ENCODE measurements at regions of chr9 and their contacts with region 1.

Region 1: DNA sequence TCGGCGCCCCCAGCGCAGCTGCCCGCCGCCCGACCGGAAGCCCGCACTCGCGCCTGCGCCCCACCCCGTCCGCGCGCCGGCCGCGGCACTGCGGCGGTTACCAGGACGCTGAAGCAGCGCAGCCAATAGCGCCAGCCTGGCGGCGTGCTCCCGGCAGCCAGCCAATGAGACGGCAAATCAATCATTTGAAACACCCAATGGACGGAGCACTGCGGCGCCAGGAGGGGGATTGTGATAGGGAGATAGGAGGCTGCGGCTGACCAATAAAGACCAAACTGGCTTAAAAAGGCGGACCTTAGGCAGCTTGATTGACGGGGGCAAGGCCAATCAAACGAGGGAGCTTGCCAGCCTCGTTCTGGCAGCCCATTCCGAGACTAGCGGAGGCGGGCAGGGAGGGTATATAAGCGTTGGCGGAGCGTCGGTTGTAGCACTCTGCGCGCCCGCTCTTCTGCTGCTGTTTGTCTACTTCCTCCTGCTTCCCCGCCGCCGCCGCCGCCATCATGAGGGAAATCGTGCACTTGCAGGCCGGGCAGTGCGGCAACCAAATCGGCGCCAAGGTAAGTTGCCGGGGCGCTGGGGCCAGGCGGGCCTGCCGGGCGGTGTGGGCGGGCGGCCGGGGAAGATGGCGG is at the start of gene TUBB4B:
- DNase-seq: peak; percentile 98 to 100 (median 99)
- H3K4me3 ChIP-seq: peak within 1 kb of the TSS; percentile 17 to 63
- H3K4me3 Mint-ChIP-seq: peak within 1 kb of the TSS; percentile 83 to 93 (median 92)
- H3K27ac ChIP-seq: peak within 1 kb of the TSS; percentile 75
- H3K27ac Mint-ChIP-seq: peak within 1 kb of the TSS; percentile 89 to 97 (median 94)
- H3K4me1 ChIP-seq: peaks cover 40% of the 10 kb centered on the region
- H3K4me1 Mint-ChIP-seq: peaks cover 6 to 43% (median 25%) of the 10 kb centered on the region in 4 donors
- H3K27me3 ChIP-seq: no peaks in the 10 kb centered on the region
- H3K27me3 Mint-ChIP-seq: peaks cover 0 to 2% of the 10 kb centered on the region in 2 donors
- total RNA-seq, gene TUBB4B: 99.8 to 103 TPM

Region 2: DNA sequence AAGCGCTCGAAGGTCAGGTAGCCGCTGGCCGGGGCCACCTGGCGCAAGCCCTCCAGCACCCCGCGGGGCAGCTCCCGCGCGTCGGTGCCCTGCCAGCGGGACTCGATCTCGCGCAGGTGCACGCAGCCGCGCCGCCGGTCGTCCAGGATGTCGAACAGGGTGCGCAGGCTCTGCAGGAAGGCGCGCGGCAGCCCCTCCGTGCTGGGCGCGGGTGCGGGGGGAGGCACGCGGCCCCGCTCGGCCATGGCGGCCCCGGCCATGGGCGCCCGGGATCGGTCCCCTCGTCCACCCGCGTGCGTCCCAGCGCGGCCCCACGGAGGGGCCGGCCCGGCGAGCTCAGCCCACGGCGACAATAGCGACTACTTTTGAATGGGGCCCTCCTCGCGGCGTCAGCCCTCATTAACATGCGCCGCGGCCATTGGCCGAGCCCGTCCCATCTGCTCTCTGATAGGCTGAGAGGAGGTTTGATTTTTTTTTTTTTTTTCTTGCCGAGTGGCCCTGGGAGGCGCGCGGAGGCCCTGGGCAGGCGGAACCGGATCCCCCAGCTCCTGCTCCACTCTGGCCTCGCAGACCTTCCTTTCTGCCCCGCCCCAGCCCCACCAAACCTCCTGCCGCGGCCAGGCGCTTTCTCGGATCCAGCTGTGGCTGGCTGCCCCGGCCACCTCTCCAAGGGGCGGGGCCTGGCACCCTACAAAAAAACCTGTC is 170.6 kb before region 1 on chr9 and contains the start of gene SAPCD2:
- CTCF ChIA-PET with region 1: interaction called, 11 read pairs
- POLR2A ChIA-PET with region 1: interaction called, 14 read pairs
- intact Hi-C with region 1: no loop called
- DNase-seq: peak; percentile 86 to 91 (median 87)
- H3K4me3 ChIP-seq: peak within 1 kb of the TSS in 1 of 2 donors; percentile 57
- H3K4me3 Mint-ChIP-seq: peak within 1 kb of the TSS; percentile 59 to 86 (median 75)
- H3K27ac ChIP-seq: no peak within 1 kb of the TSS
- H3K27ac Mint-ChIP-seq: peak within 1 kb of the TSS in 5 of 7 donors; percentile 47 to 91 (median 82)
- H3K4me1 ChIP-seq: peaks cover 21% of the 10 kb centered on the region
- H3K4me1 Mint-ChIP-seq: peaks cover 4 to 17% (median 11%) of the 10 kb centered on the region in 4 donors
- H3K27me3 ChIP-seq: no peaks in the 10 kb centered on the region
- H3K27me3 Mint-ChIP-seq: peaks cover 0 to 4% of the 10 kb centered on the region in 2 donors
- total RNA-seq, gene SAPCD2: 0.09 to 0.11 TPM

Region 3: DNA sequence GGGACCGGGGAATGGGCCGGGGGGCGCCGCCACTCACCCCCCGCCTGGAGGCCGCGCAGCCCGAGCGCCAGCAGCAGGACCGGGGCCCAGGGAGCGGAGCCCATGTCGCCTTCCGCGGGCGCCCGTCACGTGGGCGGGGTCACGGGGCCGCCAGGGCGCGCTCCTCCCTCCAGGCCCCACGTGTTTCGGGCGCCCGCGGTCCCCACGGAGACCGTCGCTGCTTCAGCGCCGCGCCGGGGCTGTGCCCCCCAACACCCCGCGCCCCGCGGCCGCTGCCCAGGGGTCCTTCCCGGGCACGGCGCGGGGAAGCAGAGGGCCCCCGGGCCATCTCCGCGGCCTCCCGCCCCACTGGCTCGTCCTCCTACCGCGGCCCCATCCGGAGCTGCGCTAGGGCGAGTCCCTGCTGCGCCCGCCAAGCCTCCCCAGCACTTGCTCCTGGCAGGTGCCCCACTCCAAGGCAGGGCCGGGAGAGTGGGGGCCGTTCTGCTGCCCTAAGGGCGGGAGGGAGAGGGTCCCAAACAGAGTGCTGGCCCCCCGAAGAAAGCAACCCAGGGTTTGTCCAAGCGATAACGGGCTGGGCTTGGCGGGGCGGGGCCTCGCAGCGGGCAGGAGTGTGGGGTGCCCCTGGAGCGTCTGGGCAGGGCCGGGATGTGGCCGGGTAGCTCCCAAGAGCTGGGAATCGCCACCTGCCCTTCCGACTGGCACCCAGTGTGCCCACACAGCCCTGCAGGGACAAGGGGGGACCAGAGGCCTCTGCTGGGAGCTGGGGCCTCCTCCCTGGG is 126.2 kb before region 1 on chr9 and contains the start of gene DPP7:
- CTCF ChIA-PET with region 1: interaction called, 6 read pairs
- POLR2A ChIA-PET with region 1: interaction called, 10 read pairs
- intact Hi-C with region 1: loop called (anchors 1 kb)
- DNase-seq: peak; percentile 79 to 83 (median 80)
- H3K4me3 ChIP-seq: peak within 1 kb of the TSS in 1 of 2 donors; percentile 43
- H3K4me3 Mint-ChIP-seq: peak within 1 kb of the TSS; percentile 39 to 78 (median 66)
- H3K27ac ChIP-seq: peak within 1 kb of the TSS; percentile 58
- H3K27ac Mint-ChIP-seq: peak within 1 kb of the TSS in 4 of 7 donors; percentile 30 to 50 (median 42)
- H3K4me1 ChIP-seq: peaks cover 16% of the 10 kb centered on the region
- H3K4me1 Mint-ChIP-seq: peaks cover 0 to 17% (median 2%) of the 10 kb centered on the region in 4 donors
- H3K27me3 ChIP-seq: no peaks in the 10 kb centered on the region
- H3K27me3 Mint-ChIP-seq: no peaks in the 10 kb centered on the region
- total RNA-seq, gene DPP7: 357 to 362 TPM

Region 4: DNA sequence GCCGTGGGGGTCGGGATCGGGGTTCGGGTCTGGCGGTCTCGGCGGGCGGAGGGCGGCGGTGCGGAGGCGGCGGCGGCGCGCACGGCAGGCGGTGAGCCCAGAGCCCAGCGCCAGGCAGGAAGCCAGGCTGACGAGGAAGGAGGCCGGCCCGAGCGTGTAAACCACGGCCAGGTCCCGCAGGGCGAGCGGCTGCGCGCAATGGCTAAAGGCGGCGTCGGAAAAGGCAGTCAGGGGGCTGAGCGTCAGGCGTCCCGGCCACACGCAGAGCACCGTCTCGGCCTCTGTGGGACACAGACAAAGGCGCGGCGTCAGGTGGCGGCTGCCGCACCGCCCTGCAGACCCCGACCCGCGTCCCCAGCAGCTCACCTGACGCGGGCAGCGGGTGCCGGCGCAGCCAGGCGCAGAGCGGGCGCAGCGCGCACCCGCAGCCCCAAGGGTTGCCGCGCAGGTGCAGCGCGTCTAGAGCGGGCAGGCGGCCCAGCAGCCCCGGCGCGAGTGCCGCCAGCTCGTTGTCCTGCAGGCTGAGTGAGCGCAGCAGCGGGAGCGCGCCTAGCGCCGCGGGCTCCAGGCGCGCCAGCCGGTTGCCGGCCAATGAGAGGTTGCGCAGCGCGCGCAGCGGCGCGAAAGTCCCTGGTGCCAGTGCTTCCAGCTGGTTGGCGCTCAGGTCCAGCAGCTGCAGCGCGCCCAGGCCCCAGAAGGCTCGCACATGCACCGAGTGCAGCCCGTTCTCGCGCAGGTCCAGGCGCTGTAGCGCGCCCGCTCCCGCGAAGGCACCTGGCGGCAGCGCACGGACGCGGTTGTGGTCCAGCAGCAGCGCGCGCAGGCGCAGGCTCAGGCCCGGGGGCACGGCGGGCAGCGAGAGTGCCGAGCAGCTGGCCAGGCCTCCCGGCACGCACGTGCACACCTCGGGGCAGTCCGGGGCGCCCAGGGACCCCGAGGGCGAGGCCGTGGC is 71.8 kb before region 1 on chr9:
- CTCF ChIA-PET with region 1: no interaction called
- POLR2A ChIA-PET with region 1: no interaction called
- intact Hi-C with region 1: no loop called
- DNase-seq: no peak
- H3K4me3 ChIP-seq: peak overlapping the region in 1 of 2 donors; percentile 14
- H3K4me3 Mint-ChIP-seq: peak overlapping the region in 6 of 8 donors; percentile 43 to 79 (median 62)
- H3K27ac ChIP-seq: no peak overlapping the region
- H3K27ac Mint-ChIP-seq: no peak overlapping the region
- H3K4me1 ChIP-seq: no peaks in the 10 kb centered on the region
- H3K4me1 Mint-ChIP-seq: peaks cover 0 to 6% (median 3%) of the 10 kb centered on the region in 4 donors
- H3K27me3 ChIP-seq: peaks cover 33% of the 10 kb centered on the region
- H3K27me3 Mint-ChIP-seq: peaks cover 14 to 16% of the 10 kb centered on the region in 2 donors

Region 5: GRCh38 chr9:137200311-137201204 is 40.4 kb before region 1 on chr9 and contains the start of gene TPRN:
- CTCF ChIA-PET with region 1: interaction called, 4 read pairs
- POLR2A ChIA-PET with region 1: interaction called, 36 read pairs
- intact Hi-C with region 1: loop called (anchors 1 kb)
- DNase-seq: peak; percentile 97 to 99 (median 98)
- H3K4me3 ChIP-seq: peak within 1 kb of the TSS; percentile 52 to 77
- H3K4me3 Mint-ChIP-seq: peak within 1 kb of the TSS; percentile 81 to 93 (median 82)
- H3K27ac ChIP-seq: peak within 1 kb of the TSS; percentile 72
- H3K27ac Mint-ChIP-seq: peak within 1 kb of the TSS; percentile 62 to 93 (median 83)
- H3K4me1 ChIP-seq: peaks cover 40% of the 10 kb centered on the region
- H3K4me1 Mint-ChIP-seq: peaks cover 9 to 35% (median 25%) of the 10 kb centered on the region in 4 donors
- H3K27me3 ChIP-seq: no peaks in the 10 kb centered on the region
- H3K27me3 Mint-ChIP-seq: no peaks in the 10 kb centered on the region
- total RNA-seq, gene TPRN: 8.5 to 8.6 TPM

Region 6: GRCh38 chr9:137254624-137255447 is 13.9 kb after region 1 on chr9 and contains the start of gene NELFB:
- CTCF ChIA-PET with region 1: interaction called, 14 read pairs
- POLR2A ChIA-PET with region 1: interaction called, 260 read pairs
- intact Hi-C with region 1: loop called (anchors 1 kb)
- DNase-seq: peak; percentile 89 to 98 (median 94)
- H3K4me3 ChIP-seq: peak within 1 kb of the TSS; percentile 66 to 81
- H3K4me3 Mint-ChIP-seq: peak within 1 kb of the TSS; percentile 88 to 94 (median 92)
- H3K27ac ChIP-seq: peak within 1 kb of the TSS; percentile 69
- H3K27ac Mint-ChIP-seq: peak within 1 kb of the TSS; percentile 43 to 92 (median 77)
- H3K4me1 ChIP-seq: peaks cover 25% of the 10 kb centered on the region
- H3K4me1 Mint-ChIP-seq: peaks cover 2 to 24% (median 10%) of the 10 kb centered on the region in 4 donors
- H3K27me3 ChIP-seq: no peaks in the 10 kb centered on the region
- H3K27me3 Mint-ChIP-seq: no peaks in the 10 kb centered on the region
- total RNA-seq, gene NELFB: 44.3 to 44.9 TPM

Region 7: GRCh38 chr9:137302176-137302994 is 61.4 kb after region 1 on chr9 and contains the start of gene NRARP:
- CTCF ChIA-PET with region 1: interaction called, 3 read pairs
- POLR2A ChIA-PET with region 1: interaction called, 11 read pairs
- intact Hi-C with region 1: loop called (anchors 1 kb)
- DNase-seq: peak; percentile 87 to 90 (median 88)
- H3K4me3 ChIP-seq: peak within 1 kb of the TSS in 1 of 2 donors; percentile 58
- H3K4me3 Mint-ChIP-seq: peak within 1 kb of the TSS in 7 of 8 donors; percentile 58 to 85 (median 66)
- H3K27ac ChIP-seq: peak within 1 kb of the TSS; percentile 15
- H3K27ac Mint-ChIP-seq: peak within 1 kb of the TSS in 1 of 7 donors; percentile 35
- H3K4me1 ChIP-seq: peaks cover 32% of the 10 kb centered on the region
- H3K4me1 Mint-ChIP-seq: peaks cover 3 to 25% (median 14%) of the 10 kb centered on the region in 4 donors
- H3K27me3 ChIP-seq: peaks cover 15% of the 10 kb centered on the region
- H3K27me3 Mint-ChIP-seq: peaks cover 2 to 7% of the 10 kb centered on the region in 2 donors
- total RNA-seq, gene NRARP: 0.25 to 0.29 TPM

Region 8: GRCh38 chr9:137330689-137331088 is 89.7 kb after region 1 on chr9:
- CTCF ChIA-PET with region 1: no interaction called
- POLR2A ChIA-PET with region 1: no interaction called
- intact Hi-C with region 1: no loop called
- DNase-seq: no peak
- H3K4me3 ChIP-seq: no peak overlapping the region
- H3K4me3 Mint-ChIP-seq: no peak overlapping the region
- H3K27ac ChIP-seq: no peak overlapping the region
- H3K27ac Mint-ChIP-seq: no peak overlapping the region
- H3K4me1 ChIP-seq: no peaks in the 10 kb centered on the region
- H3K4me1 Mint-ChIP-seq: peaks cover 0 to 9% (median 0%) of the 10 kb centered on the region in 4 donors
- H3K27me3 ChIP-seq: peaks cover 6% of the 10 kb centered on the region
- H3K27me3 Mint-ChIP-seq: peaks cover 20 to 22% of the 10 kb centered on the region in 2 donors